ENCODE measurements at regions of chr11 and their contacts with region 1.

Region 1: GRCh38 chr11:79708300-79708932 is 267.6 kb upstream of the TENM4 start:
- DNase-seq: peak; percentile 70
- H3K4me3 Mint-ChIP-seq: no peak overlapping the region
- H3K27ac Mint-ChIP-seq: no peak overlapping the region
- H3K4me1 Mint-ChIP-seq: no peaks in the 10 kb centered on the region
- H3K27me3 Mint-ChIP-seq: no peaks in the 10 kb centered on the region
- CTCF ChIP-seq: peak; percentile 71

Region 2: GRCh38 chr11:79400717-79401686 is 307.4 kb before region 1 on chr11:
- CTCF ChIA-PET with region 1: no interaction called
- POLR2A ChIA-PET with region 1: no interaction called
- intact Hi-C with region 1: loop called (anchors 2 kb)
- DNase-seq: peak; percentile 70
- H3K4me3 Mint-ChIP-seq: no peak overlapping the region
- H3K27ac Mint-ChIP-seq: no peak overlapping the region
- H3K4me1 Mint-ChIP-seq: peaks cover 11% of the 10 kb centered on the region
- H3K27me3 Mint-ChIP-seq: no peaks in the 10 kb centered on the region
- CTCF ChIP-seq: peak; percentile 94

Region 3: DNA sequence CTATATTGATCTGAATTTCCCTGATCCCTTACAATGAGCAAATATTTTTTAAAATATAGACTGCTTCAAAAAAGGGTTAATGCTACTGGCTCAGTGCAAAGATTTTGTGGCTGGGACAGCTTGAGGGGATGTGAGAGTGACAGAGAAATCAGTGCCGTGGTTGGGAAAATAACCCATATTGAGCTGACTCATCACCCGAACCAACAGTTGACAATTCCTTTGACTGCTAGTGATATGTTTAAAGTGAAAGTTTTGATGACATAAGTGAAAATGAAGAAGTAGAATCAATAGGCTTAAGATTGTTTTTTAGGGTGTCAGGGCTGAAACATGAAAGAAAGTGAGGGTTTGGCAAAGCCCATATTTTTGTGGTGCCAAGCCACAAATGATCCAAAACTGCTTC is 10.5 kb before region 1 on chr11:
- CTCF ChIA-PET with region 1: interaction called, 17 read pairs
- POLR2A ChIA-PET with region 1: interaction called, 5 read pairs
- intact Hi-C with region 1: no loop called
- DNase-seq: no peak
- H3K4me3 Mint-ChIP-seq: no peak overlapping the region
- H3K27ac Mint-ChIP-seq: no peak overlapping the region
- H3K4me1 Mint-ChIP-seq: peaks cover 11% of the 10 kb centered on the region
- H3K27me3 Mint-ChIP-seq: no peaks in the 10 kb centered on the region
- CTCF ChIP-seq: no peak

Region 4: GRCh38 chr11:80155412-80156017 is 447.1 kb after region 1 on chr11:
- CTCF ChIA-PET with region 1: interaction called, 44 read pairs
- POLR2A ChIA-PET with region 1: interaction called, 3 read pairs
- intact Hi-C with region 1: loop called (anchors 1 kb)
- DNase-seq: peak; percentile 55
- H3K4me3 Mint-ChIP-seq: no peak overlapping the region
- H3K27ac Mint-ChIP-seq: no peak overlapping the region
- H3K4me1 Mint-ChIP-seq: no peaks in the 10 kb centered on the region
- H3K27me3 Mint-ChIP-seq: peaks cover 9% of the 10 kb centered on the region
- CTCF ChIP-seq: peak; percentile 67

Region 5: DNA sequence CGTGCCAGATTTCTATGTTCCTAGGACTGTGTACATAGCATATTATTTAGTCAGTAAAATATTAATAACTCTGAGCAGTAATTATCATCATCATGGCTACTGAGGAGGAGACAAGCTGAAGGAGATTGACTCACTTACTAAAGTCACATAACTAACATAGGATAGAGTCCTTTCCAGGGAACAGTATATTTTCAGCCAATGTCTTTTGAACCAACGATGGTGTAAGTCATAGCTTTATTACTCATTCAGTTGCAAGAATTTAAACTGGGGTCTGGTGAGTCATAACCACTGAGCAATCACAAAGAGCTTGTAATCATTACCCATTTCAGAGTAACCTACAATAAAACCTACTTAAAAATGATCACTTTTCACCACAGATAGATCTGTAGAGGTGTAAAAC is 1297.2 kb after region 1 on chr11:
- CTCF ChIA-PET with region 1: interaction called, 11 read pairs
- POLR2A ChIA-PET with region 1: no interaction called
- intact Hi-C with region 1: loop called (anchors 1 kb)
- DNase-seq: peak; percentile 88
- H3K4me3 Mint-ChIP-seq: no peak overlapping the region
- H3K27ac Mint-ChIP-seq: peak overlapping the region; percentile 16
- H3K4me1 Mint-ChIP-seq: peaks cover 15% of the 10 kb centered on the region
- H3K27me3 Mint-ChIP-seq: no peaks in the 10 kb centered on the region
- CTCF ChIP-seq: no peak

Measured in MCF 10A (cell line).